CD8-positive, alpha-beta memory T cell (primary cell): ENCODE measurements at regions of chr18 and their contacts with region 1.

Region 1: DNA sequence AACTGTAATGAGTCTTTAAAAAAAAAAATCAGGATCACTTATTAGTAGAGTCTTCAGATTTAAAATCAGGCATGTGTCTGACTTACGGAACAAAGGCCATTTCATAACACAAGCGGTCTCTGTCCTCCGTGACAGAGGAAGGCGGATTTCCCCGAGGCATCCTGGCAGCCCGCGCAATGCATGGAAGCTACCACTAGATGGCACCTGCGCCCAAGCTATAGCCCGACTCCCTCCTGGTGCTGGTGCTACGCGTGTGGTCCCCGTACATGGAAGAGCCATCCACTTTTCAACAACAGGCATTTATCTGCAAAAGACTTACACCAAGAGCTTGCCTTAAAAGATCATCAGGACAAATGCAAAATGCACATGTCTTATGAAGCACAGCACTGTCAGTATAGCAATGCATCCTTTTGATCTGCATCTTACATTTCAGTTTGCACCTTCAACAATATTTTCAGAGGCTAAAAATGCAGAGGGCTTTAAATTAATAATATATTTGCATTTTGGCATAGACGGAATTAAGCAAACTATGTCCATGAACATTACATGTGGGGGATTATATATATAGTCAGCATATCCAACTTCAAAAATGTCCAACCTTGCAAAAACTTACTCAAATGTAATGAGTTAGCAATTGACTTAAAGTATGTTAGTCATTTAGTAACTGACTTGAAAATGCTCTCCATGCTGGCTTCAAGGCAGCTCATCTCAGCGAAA is 96.0 kb downstream of the ZNF516 start:
- DNase-seq: peak; percentile 43 to 68 (median 57)
- H3K4me3 ChIP-seq: no peak overlapping the region
- H3K4me3 Mint-ChIP-seq: no peak overlapping the region
- H3K27ac ChIP-seq: no peak overlapping the region
- H3K27ac Mint-ChIP-seq: peak overlapping the region in 1 of 8 donors; percentile 29
- H3K4me1 ChIP-seq: peaks cover 5% of the 10 kb centered on the region
- H3K4me1 Mint-ChIP-seq: peaks cover 4 to 11% (median 5%) of the 10 kb centered on the region in 3 donors
- H3K27me3 ChIP-seq: no peaks in the 10 kb centered on the region
- H3K27me3 Mint-ChIP-seq: no peaks in the 10 kb centered on the region

Region 2: GRCh38 chr18:76169733-76170132 is 229.3 kb before region 1 on chr18:
- CTCF ChIA-PET with region 1: no interaction called
- POLR2A ChIA-PET with region 1: no interaction called
- DNase-seq: no peak
- H3K4me3 ChIP-seq: no peak overlapping the region
- H3K4me3 Mint-ChIP-seq: no peak overlapping the region
- H3K27ac ChIP-seq: no peak overlapping the region
- H3K27ac Mint-ChIP-seq: no peak overlapping the region
- H3K4me1 ChIP-seq: no peaks in the 10 kb centered on the region
- H3K4me1 Mint-ChIP-seq: no peaks in the 10 kb centered on the region
- H3K27me3 ChIP-seq: no peaks in the 10 kb centered on the region
- H3K27me3 Mint-ChIP-seq: peaks cover 3 to 5% of the 10 kb centered on the region in 2 donors

Region 3: DNA sequence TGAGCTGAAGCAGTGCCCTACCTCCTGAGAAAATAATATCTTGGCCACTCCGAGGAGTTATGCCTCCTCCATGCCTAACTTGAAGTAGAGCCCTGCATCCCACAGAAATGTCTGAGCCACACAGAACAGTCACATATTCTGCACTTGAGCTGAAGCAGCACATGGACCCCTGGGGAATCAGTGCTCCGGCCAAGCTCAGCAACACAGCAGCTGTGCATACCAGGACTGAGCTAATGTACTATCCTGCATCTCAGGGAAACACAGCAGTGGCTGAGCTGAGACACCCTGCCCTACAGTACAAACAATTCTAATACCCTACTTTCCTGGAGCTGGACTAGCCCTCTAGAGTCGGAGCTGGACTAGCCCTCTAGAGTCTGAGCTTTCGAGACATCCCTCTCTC is 70.9 kb before region 1 on chr18:
- CTCF ChIA-PET with region 1: no interaction called
- POLR2A ChIA-PET with region 1: no interaction called
- DNase-seq: no peak
- H3K4me3 ChIP-seq: no peak overlapping the region
- H3K4me3 Mint-ChIP-seq: no peak overlapping the region
- H3K27ac ChIP-seq: no peak overlapping the region
- H3K27ac Mint-ChIP-seq: no peak overlapping the region
- H3K4me1 ChIP-seq: no peaks in the 10 kb centered on the region
- H3K4me1 Mint-ChIP-seq: no peaks in the 10 kb centered on the region
- H3K27me3 ChIP-seq: no peaks in the 10 kb centered on the region
- H3K27me3 Mint-ChIP-seq: peaks cover 8 to 26% of the 10 kb centered on the region in 2 donors

Region 4: GRCh38 chr18:76388891-76389423 is 10.1 kb before region 1 on chr18:
- CTCF ChIA-PET with region 1: interaction called, 15 read pairs
- POLR2A ChIA-PET with region 1: no interaction called
- DNase-seq: no peak
- H3K4me3 ChIP-seq: no peak overlapping the region
- H3K4me3 Mint-ChIP-seq: no peak overlapping the region
- H3K27ac ChIP-seq: no peak overlapping the region
- H3K27ac Mint-ChIP-seq: peak overlapping the region in 2 of 8 donors; percentile 19 to 48
- H3K4me1 ChIP-seq: peaks cover 26% of the 10 kb centered on the region
- H3K4me1 Mint-ChIP-seq: peaks cover 15 to 27% (median 22%) of the 10 kb centered on the region in 3 donors
- H3K27me3 ChIP-seq: no peaks in the 10 kb centered on the region
- H3K27me3 Mint-ChIP-seq: peaks cover 7 to 15% of the 10 kb centered on the region in 2 donors

Region 5: GRCh38 chr18:76721207-76721996 is 322.3 kb after region 1 on chr18:
- CTCF ChIA-PET with region 1: interaction called, 11 read pairs
- POLR2A ChIA-PET with region 1: no interaction called
- DNase-seq: peak; percentile 28 to 86 (median 80)
- H3K4me3 ChIP-seq: peak overlapping the region; percentile 42
- H3K4me3 Mint-ChIP-seq: peak overlapping the region; percentile 37 to 87 (median 80)
- H3K27ac ChIP-seq: no peak overlapping the region
- H3K27ac Mint-ChIP-seq: peak overlapping the region; percentile 3 to 93 (median 73)
- H3K4me1 ChIP-seq: peaks cover 56% of the 10 kb centered on the region
- H3K4me1 Mint-ChIP-seq: peaks cover 46 to 58% (median 56%) of the 10 kb centered on the region in 3 donors
- H3K27me3 ChIP-seq: no peaks in the 10 kb centered on the region
- H3K27me3 Mint-ChIP-seq: peaks cover 0 to 6% of the 10 kb centered on the region in 2 donors